ENCODE measurements at regions of chr10 and their contacts with region 1.

Region 1: GRCh38 chr10:110354322-110354766 is 49.6 kb upstream of the SMNDC1 start:
- DNase-seq: peak; percentile 86
- ATAC-seq: no peak
- H3K4me3 ChIP-seq: no peak overlapping the region
- H3K4me3 Mint-ChIP-seq: peak overlapping the region; percentile 86
- H3K27ac ChIP-seq: peak overlapping the region in 1 of 2 donors; percentile 94
- H3K27ac Mint-ChIP-seq: peak overlapping the region; percentile 94
- H3K4me1 ChIP-seq: peaks cover 52 to 56% of the 10 kb centered on the region in 2 donors
- H3K4me1 Mint-ChIP-seq: peaks cover 70% of the 10 kb centered on the region
- H3K27me3 ChIP-seq: no peaks in the 10 kb centered on the region
- H3K27me3 Mint-ChIP-seq: no peaks in the 10 kb centered on the region
- CTCF ChIP-seq: peak; percentile 84

Region 2: DNA sequence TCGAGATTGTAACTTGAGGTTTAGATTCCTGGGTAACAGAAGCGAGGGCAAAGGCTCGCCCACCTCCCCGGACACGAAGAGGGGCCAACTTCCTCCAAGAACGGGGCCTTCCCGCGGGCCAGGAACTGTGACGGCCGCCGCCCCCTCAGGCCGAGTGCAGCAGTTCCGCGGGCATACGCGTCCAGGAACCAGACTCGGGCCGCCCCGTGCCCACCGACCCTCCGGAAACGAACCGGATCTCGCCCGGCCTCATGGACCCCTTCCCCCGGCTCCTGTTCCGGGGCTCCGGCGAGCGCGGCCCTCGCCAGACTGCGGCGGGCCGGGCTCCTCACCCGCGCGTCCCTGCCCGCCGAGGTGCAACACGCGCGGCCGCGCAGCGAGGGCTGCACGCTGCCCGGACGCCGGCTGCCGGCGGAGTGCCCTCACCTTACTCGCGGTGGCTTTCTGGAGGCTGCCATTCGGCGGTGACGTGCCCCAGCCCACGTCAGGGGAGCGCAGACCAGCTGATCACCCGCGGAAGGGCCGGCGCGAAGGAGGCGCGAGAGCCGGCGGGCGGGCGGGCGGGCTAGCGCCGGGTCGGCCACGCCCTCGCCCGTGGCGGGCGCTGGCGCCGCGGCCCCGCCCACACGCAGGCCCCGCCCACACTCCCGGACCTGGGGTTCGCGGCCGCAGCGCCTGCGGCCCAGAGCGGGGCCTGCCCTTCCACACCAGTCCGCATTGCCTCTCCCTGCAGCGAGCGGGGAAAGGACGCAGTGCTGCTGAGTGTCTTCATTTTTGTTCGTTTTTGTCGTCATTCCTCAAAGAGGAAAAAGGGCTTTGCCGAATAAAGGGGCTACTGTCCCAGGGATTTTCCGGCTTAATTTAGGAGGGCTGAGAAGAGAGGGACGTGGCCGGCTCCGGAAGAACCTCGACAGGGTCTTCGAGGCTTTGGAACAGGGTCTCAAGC is 431.1 kb before region 1 on chr10 and contains the start of gene XPNPEP1:
- CTCF ChIA-PET with region 1: no interaction called
- POLR2A ChIA-PET with region 1: no interaction called
- intact Hi-C with region 1: no loop called
- DNase-seq: peak; percentile 92
- ATAC-seq: peak; percentile 96
- H3K4me3 ChIP-seq: peak within 1 kb of the TSS; percentile 55 to 91 (median 75)
- H3K4me3 Mint-ChIP-seq: peak within 1 kb of the TSS; percentile 90
- H3K27ac ChIP-seq: peak within 1 kb of the TSS; percentile 60 to 81
- H3K27ac Mint-ChIP-seq: peak within 1 kb of the TSS; percentile 88
- H3K4me1 ChIP-seq: peaks cover 18 to 23% of the 10 kb centered on the region in 2 donors
- H3K4me1 Mint-ChIP-seq: peaks cover 39% of the 10 kb centered on the region
- H3K27me3 ChIP-seq: no peaks in the 10 kb centered on the region
- H3K27me3 Mint-ChIP-seq: no peaks in the 10 kb centered on the region
- CTCF ChIP-seq: no peak
- total RNA-seq, gene XPNPEP1: 56.1 and 60.6 TPM in 2 replicates

Region 3: DNA sequence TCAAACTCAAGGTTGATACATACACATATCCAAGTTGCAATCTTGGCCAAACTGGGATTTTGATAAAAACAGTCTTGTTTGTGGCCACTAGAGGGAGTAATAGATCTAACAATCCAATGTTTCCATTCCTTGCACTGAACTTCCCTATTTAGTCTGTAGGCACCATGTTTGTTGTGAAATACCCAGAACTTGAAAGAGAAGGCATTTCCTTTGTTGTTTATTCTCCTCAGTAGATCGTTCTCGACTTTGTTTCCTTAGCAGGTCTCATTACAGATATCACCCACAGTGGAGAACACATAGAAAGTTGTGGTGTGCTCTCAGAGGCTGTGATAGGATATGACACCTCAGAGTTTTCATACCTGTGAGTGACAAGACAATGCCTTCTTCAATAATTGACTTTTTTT is 217.2 kb before region 1 on chr10:
- CTCF ChIA-PET with region 1: no interaction called
- POLR2A ChIA-PET with region 1: no interaction called
- intact Hi-C with region 1: loop called (anchors 5 kb)
- DNase-seq: peak; percentile 82
- ATAC-seq: peak; percentile 67
- H3K4me3 ChIP-seq: no peak overlapping the region
- H3K4me3 Mint-ChIP-seq: peak overlapping the region; percentile 18
- H3K27ac ChIP-seq: peak overlapping the region; percentile 11 to 58
- H3K27ac Mint-ChIP-seq: peak overlapping the region; percentile 47
- H3K4me1 ChIP-seq: peaks cover 20 to 26% of the 10 kb centered on the region in 2 donors
- H3K4me1 Mint-ChIP-seq: peaks cover 37% of the 10 kb centered on the region
- H3K27me3 ChIP-seq: no peaks in the 10 kb centered on the region
- H3K27me3 Mint-ChIP-seq: no peaks in the 10 kb centered on the region
- CTCF ChIP-seq: peak; percentile 85

Region 4: DNA sequence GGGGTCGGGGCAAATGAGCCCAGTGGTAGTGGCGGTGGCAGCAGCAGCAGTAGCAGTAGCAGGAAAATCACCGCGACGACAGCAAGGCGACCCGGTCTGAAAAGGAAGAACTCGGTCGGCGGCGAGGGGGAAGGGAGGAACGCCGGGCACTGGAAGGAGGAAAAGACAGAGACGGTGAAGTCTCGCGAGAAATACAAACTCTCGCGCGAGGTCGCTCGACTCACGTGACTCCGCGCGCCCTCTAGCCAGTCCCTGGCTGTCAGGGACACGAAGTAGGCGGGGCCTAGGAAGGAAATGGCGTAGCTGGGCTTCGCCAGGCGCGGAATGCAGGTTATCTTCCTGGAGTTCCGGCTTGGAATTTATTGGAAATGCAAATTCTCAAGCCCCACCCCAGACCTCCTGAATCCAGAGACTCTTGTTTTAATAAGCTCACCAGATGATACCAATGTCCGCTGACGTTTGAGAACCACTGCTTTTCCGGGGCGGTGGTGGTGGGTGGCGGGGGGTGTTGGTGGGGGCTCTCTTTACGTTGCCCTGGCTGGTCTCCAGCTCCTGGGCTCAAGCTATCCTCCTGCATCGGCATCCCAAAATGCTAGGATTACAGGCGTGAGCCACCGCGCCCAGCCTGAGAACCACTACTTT is 49.4 kb before region 1 on chr10 and contains the start of gene SMNDC1:
- CTCF ChIA-PET with region 1: interaction called, 22 read pairs
- POLR2A ChIA-PET with region 1: interaction called, 4 read pairs
- intact Hi-C with region 1: loop called (anchors 1 kb)
- DNase-seq: peak; percentile 98
- ATAC-seq: peak; percentile 93
- H3K4me3 ChIP-seq: peak within 1 kb of the TSS; percentile 64 to 89 (median 79)
- H3K4me3 Mint-ChIP-seq: peak within 1 kb of the TSS; percentile 98
- H3K27ac ChIP-seq: peak within 1 kb of the TSS; percentile 76 to 91
- H3K27ac Mint-ChIP-seq: peak within 1 kb of the TSS; percentile 99
- H3K4me1 ChIP-seq: peaks cover 20 to 24% of the 10 kb centered on the region in 2 donors
- H3K4me1 Mint-ChIP-seq: peaks cover 43% of the 10 kb centered on the region
- H3K27me3 ChIP-seq: no peaks in the 10 kb centered on the region
- H3K27me3 Mint-ChIP-seq: no peaks in the 10 kb centered on the region
- CTCF ChIP-seq: no peak
- total RNA-seq, gene SMNDC1: 34.4 and 36.0 TPM in 2 replicates

Region 5: DNA sequence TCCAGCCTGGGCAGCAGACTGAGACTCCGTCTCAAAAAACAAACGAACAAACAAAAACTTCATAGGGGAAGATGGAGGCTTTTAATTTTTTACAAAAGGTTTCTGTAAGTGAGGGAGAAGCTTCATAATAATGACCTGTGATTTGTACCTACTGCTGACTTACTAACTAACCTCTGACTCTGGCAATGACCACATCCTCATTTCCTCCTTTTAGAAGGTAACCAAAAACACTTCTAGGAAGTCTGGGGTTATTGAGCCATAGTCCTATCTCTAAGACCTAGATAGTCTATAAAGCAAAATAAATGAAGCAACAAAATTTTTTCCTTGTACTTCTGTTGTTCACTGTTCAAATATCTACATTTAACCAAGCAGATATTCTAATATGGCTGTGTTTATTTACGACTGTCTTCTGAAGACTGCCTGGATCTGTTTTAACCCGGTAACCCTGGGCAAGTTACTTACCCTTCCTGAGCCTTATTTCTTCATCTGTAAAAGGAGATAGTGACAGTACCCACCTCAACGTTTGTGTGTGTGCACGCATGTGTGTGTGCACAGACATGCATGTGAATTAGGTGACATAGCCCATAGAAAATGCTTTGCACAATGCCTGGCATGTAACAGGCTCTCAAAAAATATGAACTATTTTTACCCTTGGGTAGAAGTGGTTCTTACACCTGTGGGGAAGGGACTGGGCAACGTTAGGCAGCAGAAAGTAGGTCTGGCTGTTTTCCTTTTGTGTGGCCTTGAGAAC is 18.9 kb before region 1 on chr10:
- CTCF ChIA-PET with region 1: interaction called, 31 read pairs
- POLR2A ChIA-PET with region 1: interaction called, 9 read pairs
- intact Hi-C with region 1: no loop called
- DNase-seq: no peak
- ATAC-seq: no peak
- H3K4me3 ChIP-seq: no peak overlapping the region
- H3K4me3 Mint-ChIP-seq: no peak overlapping the region
- H3K27ac ChIP-seq: no peak overlapping the region
- H3K27ac Mint-ChIP-seq: no peak overlapping the region
- H3K4me1 ChIP-seq: peaks cover 5 to 6% of the 10 kb centered on the region in 2 donors
- H3K4me1 Mint-ChIP-seq: peaks cover 7% of the 10 kb centered on the region
- H3K27me3 ChIP-seq: no peaks in the 10 kb centered on the region
- H3K27me3 Mint-ChIP-seq: peaks cover 11% of the 10 kb centered on the region
- CTCF ChIP-seq: no peak

Region 6: DNA sequence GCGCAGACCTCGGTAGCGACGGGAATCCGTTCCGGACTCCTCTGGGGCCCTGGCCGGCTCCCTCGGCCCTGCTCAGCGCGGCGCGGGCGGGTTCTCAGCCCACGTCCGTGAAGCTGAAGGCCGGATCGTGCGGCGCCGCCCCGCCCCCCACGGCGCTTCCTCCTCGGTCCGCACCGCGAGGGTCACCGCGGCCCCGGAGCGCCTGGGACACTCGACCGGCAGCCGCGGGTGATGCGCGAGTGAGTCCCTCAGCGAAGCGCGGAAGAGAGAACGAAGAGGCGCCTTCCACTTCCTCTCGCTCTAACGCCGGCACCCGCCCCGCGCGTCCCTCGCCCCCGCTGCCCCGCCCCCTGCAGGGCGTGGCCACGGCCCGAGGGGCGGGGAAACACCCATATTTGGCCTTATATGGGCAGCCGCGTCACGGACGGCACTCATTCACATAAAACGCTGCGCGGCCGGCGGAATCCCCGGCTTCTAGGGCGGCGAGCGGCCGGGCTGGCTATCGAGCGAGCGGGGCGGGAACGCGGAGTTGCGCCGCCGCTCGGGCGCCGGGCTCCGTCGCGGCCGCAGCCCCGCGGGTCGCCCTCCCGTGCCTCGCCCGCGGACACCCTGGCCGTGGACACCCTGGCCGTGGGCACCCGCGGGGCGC is 143.2 kb after region 1 on chr10 and contains the start of gene DUSP5:
- CTCF ChIA-PET with region 1: interaction called, 87 read pairs
- POLR2A ChIA-PET with region 1: interaction called, 12 read pairs
- intact Hi-C with region 1: loop called (anchors 1 kb)
- DNase-seq: peak; percentile 99
- ATAC-seq: peak; percentile 91
- H3K4me3 ChIP-seq: peak within 1 kb of the TSS in 4 of 5 experiments; percentile 57 to 71 (median 62)
- H3K4me3 Mint-ChIP-seq: peak within 1 kb of the TSS; percentile 93
- H3K27ac ChIP-seq: peak within 1 kb of the TSS; percentile 65 to 80
- H3K27ac Mint-ChIP-seq: peak within 1 kb of the TSS; percentile 93
- H3K4me1 ChIP-seq: peaks cover 35 to 51% of the 10 kb centered on the region in 2 donors
- H3K4me1 Mint-ChIP-seq: peaks cover 56% of the 10 kb centered on the region
- H3K27me3 ChIP-seq: peaks cover 0 to 14% (median 2%) of the 10 kb centered on the region in 4 experiments
- H3K27me3 Mint-ChIP-seq: peaks cover 6% of the 10 kb centered on the region
- CTCF ChIP-seq: no peak
- total RNA-seq, gene DUSP5: 10.0 and 10.8 TPM in 2 replicates

Region 7: GRCh38 chr10:110547139-110547761 is 192.9 kb after region 1 on chr10:
- CTCF ChIA-PET with region 1: interaction called, 164 read pairs
- POLR2A ChIA-PET with region 1: interaction called, 17 read pairs
- intact Hi-C with region 1: loop called (anchors 1 kb)
- DNase-seq: peak; percentile 76
- ATAC-seq: peak; percentile 68
- H3K4me3 ChIP-seq: no peak overlapping the region
- H3K4me3 Mint-ChIP-seq: no peak overlapping the region
- H3K27ac ChIP-seq: no peak overlapping the region
- H3K27ac Mint-ChIP-seq: no peak overlapping the region
- H3K4me1 ChIP-seq: no peaks in the 10 kb centered on the region
- H3K4me1 Mint-ChIP-seq: peaks cover 4% of the 10 kb centered on the region
- H3K27me3 ChIP-seq: peaks cover 0 to 9% (median 4%) of the 10 kb centered on the region in 4 experiments
- H3K27me3 Mint-ChIP-seq: peaks cover 24% of the 10 kb centered on the region
- CTCF ChIP-seq: peak; percentile 85

Region 8: DNA sequence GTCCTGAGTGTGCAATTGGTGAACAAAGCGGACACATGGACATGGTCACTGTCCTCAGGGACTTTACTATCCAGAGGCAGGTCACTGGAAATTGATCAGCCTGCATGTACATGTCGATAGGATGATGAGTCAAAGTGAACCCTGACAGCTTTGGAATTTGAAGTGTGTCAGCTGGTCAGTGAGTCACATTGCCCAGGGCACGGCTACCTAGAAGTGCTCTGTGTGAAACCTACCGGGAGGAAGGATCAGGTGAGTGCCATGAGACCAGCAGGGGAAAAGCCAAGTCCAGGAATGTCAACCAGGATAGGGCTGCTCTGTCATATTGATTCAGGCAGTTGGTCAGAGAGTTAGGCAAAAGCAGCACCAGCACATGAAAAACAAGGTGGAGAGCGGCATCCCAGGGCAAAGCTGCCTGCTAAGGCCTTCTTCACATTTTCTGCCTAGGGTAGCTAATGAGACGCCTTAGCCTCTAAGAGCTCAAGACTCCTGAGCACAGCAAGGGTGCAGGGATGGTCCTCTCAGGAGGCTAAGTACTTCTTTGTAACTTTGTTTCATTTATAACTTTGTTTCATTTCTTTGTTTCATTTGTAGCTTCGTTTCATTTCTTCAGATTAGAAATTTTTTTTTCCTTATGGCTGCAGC is 498.0 kb after region 1 on chr10:
- CTCF ChIA-PET with region 1: no interaction called
- POLR2A ChIA-PET with region 1: no interaction called
- intact Hi-C with region 1: no loop called
- DNase-seq: no peak
- ATAC-seq: no peak
- H3K4me3 ChIP-seq: no peak overlapping the region
- H3K4me3 Mint-ChIP-seq: no peak overlapping the region
- H3K27ac ChIP-seq: no peak overlapping the region
- H3K27ac Mint-ChIP-seq: no peak overlapping the region
- H3K4me1 ChIP-seq: peaks cover 20 to 30% of the 10 kb centered on the region in 2 donors
- H3K4me1 Mint-ChIP-seq: peaks cover 51% of the 10 kb centered on the region
- H3K27me3 ChIP-seq: no peaks in the 10 kb centered on the region
- H3K27me3 Mint-ChIP-seq: no peaks in the 10 kb centered on the region
- CTCF ChIP-seq: no peak

Region 9: DNA sequence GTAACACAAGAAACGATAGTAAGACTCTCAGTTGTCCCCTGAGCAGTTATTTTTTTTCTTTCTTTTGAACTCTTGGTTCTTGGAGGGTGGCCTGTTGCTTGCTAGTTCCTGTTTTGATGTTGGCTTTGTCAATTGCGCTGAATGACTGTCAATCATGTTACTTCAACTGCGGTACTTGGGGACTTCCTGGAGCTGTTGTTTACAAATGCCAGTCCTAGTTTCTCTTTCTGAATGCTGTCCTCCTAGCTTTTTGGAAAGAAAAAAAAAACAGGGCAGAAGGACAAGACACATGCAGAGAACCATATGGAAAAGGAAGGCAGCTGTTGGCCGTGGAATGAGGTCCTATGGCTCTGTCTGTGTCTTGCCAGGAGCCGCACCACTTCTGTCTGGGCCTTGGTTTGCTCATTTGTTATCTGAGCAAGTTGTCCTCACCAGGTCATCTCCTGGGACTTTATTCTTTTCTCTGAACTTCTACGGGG is 510.4 kb after region 1 on chr10:
- CTCF ChIA-PET with region 1: no interaction called
- POLR2A ChIA-PET with region 1: no interaction called
- intact Hi-C with region 1: loop called (anchors 5 kb)
- DNase-seq: peak; percentile 89
- ATAC-seq: peak; percentile 55
- H3K4me3 ChIP-seq: peak overlapping the region in 4 of 5 experiments; percentile 21 to 60 (median 38)
- H3K4me3 Mint-ChIP-seq: peak overlapping the region; percentile 85
- H3K27ac ChIP-seq: peak overlapping the region; percentile 94 to 96
- H3K27ac Mint-ChIP-seq: peak overlapping the region; percentile 97
- H3K4me1 ChIP-seq: peaks cover 97 to 100% of the 10 kb centered on the region in 2 donors
- H3K4me1 Mint-ChIP-seq: peaks cover 97% of the 10 kb centered on the region
- H3K27me3 ChIP-seq: no peaks in the 10 kb centered on the region
- H3K27me3 Mint-ChIP-seq: no peaks in the 10 kb centered on the region
- CTCF ChIP-seq: no peak

Region 10: GRCh38 chr10:111297351-111297848 is 943.1 kb after region 1 on chr10:
- CTCF ChIA-PET with region 1: no interaction called
- POLR2A ChIA-PET with region 1: no interaction called
- intact Hi-C with region 1: no loop called
- DNase-seq: no peak
- ATAC-seq: no peak
- H3K4me3 ChIP-seq: no peak overlapping the region
- H3K4me3 Mint-ChIP-seq: no peak overlapping the region
- H3K27ac ChIP-seq: no peak overlapping the region
- H3K27ac Mint-ChIP-seq: no peak overlapping the region
- H3K4me1 ChIP-seq: no peaks in the 10 kb centered on the region
- H3K4me1 Mint-ChIP-seq: no peaks in the 10 kb centered on the region
- H3K27me3 ChIP-seq: peaks cover 0 to 5% (median 0%) of the 10 kb centered on the region in 4 experiments
- H3K27me3 Mint-ChIP-seq: peaks cover 29% of the 10 kb centered on the region
- CTCF ChIP-seq: no peak

Measured in B cell (primary cell).